Activated CD8-positive, alpha-beta T cell treated with anti-CD3 and anti-CD28 coated beads for 36 hours (primary cell): ENCODE measurements at regions of chr1 and their contacts with region 1.

Region 1: GRCh38 chr1:92749024-92749634 is 35.8 kb downstream of the EVI5 start:
- DNase-seq: peak; percentile 51
- ATAC-seq: peak; percentile 74
- H3K4me3 Mint-ChIP-seq: no peak overlapping the region
- H3K27ac Mint-ChIP-seq: no peak overlapping the region
- H3K4me1 Mint-ChIP-seq: no peaks in the 10 kb centered on the region
- H3K27me3 Mint-ChIP-seq: no peaks in the 10 kb centered on the region
- CTCF ChIP-seq: peak; percentile 68

Region 2: DNA sequence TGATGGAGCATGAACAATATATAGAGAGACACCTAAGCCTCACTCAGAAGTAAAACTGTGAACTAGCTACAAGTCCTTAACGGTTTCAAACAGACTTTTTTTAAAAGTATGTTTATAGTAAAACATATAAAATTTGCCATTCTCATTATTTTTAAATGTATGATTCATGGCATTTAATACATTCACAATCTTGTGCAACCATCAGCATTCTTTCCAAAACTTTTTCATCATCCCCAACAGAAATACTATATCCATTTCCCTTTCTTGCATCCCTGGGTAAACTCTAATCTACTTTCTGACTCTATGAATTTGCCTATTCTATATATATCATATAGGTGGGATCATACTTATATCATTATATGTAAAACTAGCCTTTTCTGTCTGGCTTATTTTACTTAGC is 10.2 kb after region 1 on chr1:
- CTCF ChIA-PET with region 1: interaction called, 16 read pairs
- POLR2A ChIA-PET with region 1: no interaction called
- intact Hi-C with region 1: no loop called
- DNase-seq: no peak
- ATAC-seq: no peak
- H3K4me3 Mint-ChIP-seq: no peak overlapping the region
- H3K27ac Mint-ChIP-seq: no peak overlapping the region
- H3K4me1 Mint-ChIP-seq: no peaks in the 10 kb centered on the region
- H3K27me3 Mint-ChIP-seq: peaks cover 4% of the 10 kb centered on the region
- CTCF ChIP-seq: no peak

Region 3: GRCh38 chr1:92792340-92792782 is 43.2 kb after region 1 on chr1:
- CTCF ChIA-PET with region 1: interaction called, 15 read pairs
- POLR2A ChIA-PET with region 1: no interaction called
- intact Hi-C with region 1: no loop called
- DNase-seq: no peak
- ATAC-seq: no peak
- H3K4me3 Mint-ChIP-seq: no peak overlapping the region
- H3K27ac Mint-ChIP-seq: no peak overlapping the region
- H3K4me1 Mint-ChIP-seq: peaks cover 2% of the 10 kb centered on the region
- H3K27me3 Mint-ChIP-seq: peaks cover 44% of the 10 kb centered on the region
- CTCF ChIP-seq: no peak

Region 4: DNA sequence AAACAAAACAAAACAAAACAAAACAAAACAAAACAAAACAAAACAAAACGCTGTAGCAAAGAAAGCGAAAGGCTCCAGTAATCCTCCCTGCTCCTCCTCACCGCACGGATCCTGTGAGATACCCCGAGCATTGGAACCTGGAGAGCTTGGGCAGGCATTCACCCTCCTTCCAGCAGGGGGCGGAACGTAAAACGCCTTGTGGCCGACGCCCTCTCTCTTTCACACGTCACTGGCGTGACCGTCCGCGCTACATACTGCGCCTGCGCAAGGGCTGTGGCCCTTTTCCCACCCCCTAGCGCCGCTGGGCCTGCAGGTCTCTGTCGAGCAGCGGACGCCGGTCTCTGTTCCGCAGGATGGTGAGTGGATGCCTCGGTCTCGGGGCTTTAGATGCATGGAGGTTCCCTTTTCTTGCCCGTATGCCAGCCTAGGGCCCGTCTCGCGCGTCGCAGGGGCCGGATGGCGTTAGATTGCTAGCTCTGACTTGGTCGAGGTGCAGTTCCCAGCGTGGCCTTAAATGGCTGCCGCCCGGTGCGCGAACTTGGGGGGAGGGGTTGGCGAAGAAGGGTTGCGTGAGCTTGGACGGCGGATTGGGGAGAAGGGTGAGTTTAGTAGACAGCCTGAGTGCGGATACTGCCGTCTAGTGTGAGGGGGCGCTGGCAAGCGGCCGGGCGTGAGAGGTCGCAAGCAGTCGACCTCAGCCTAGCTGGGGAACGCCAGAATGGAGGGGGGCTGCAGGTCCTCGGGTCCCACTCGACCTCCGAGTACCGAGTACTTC is 82.8 kb after region 1 on chr1 and contains the start of gene RPL5:
- CTCF ChIA-PET with region 1: interaction called, 16 read pairs
- POLR2A ChIA-PET with region 1: no interaction called
- intact Hi-C with region 1: no loop called
- DNase-seq: peak; percentile 98
- ATAC-seq: peak; percentile 93
- H3K4me3 Mint-ChIP-seq: peak within 1 kb of the TSS; percentile 99
- H3K27ac Mint-ChIP-seq: peak within 1 kb of the TSS; percentile 99
- H3K4me1 Mint-ChIP-seq: peaks cover 28% of the 10 kb centered on the region
- H3K27me3 Mint-ChIP-seq: no peaks in the 10 kb centered on the region
- CTCF ChIP-seq: peak; percentile 95
- total RNA-seq, gene RPL5: 1,782 to 1,792 TPM

Region 5: GRCh38 chr1:92934395-92935378 is 185.6 kb after region 1 on chr1:
- CTCF ChIA-PET with region 1: no interaction called
- POLR2A ChIA-PET with region 1: no interaction called
- intact Hi-C with region 1: no loop called
- DNase-seq: no peak
- ATAC-seq: no peak
- H3K4me3 Mint-ChIP-seq: no peak overlapping the region
- H3K27ac Mint-ChIP-seq: no peak overlapping the region
- H3K4me1 Mint-ChIP-seq: peaks cover 45% of the 10 kb centered on the region
- H3K27me3 Mint-ChIP-seq: no peaks in the 10 kb centered on the region
- CTCF ChIP-seq: no peak